ENCODE measurements at regions of chr9 and their contacts with region 1.

Region 1: DNA sequence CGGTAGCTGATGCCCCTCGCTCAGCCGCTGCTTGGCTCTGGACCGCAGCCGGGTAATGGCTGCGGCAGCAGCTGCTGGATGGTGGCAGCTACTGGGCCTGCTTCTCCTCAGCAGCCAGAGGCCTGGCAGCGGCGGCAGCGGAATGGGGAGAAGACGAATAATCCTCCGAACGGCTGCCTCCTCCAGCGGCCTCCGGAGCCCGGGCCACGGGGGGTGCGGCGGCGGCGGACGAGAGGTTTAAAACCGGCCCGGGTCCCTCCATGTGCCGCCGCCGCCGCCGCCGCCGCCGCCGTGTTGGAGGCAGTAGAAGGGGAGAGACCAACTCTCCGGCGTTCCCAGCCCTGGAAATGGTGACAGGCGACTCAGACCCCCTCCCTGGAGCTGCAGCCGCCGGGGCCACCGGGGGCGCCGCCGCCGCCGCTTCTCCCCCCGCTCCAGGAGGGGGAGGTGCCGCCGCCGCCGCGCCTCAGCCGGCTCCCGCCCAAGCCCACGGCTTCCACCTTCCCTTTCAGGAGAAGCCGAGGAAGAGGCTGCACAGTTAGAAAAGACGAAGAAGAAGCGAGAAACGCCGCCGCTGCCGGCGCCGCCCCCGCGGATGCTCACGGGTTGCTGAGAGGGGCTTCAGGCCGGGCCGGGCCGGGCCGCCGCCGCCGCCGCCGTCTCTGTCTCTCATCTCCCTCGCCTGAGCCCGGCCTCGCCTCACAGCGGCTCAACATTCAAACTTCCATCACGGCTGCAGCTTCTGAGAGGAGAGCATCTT is 118.4 kb upstream of the PRSS3 start:
- DNase-seq: peak; percentile 11
- H3K4me3 Mint-ChIP-seq: peak overlapping the region; percentile 90
- H3K27ac Mint-ChIP-seq: no peak overlapping the region
- H3K4me1 Mint-ChIP-seq: peaks cover 18% of the 10 kb centered on the region
- H3K27me3 Mint-ChIP-seq: peaks cover 73% of the 10 kb centered on the region

Region 2: GRCh38 chr9:33637881-33638280 is 39.0 kb before region 1 on chr9:
- intact Hi-C with region 1: loop called (anchors 2 kb)
- DNase-seq: no peak
- H3K4me3 Mint-ChIP-seq: no peak overlapping the region
- H3K27ac Mint-ChIP-seq: no peak overlapping the region
- H3K4me1 Mint-ChIP-seq: no peaks in the 10 kb centered on the region
- H3K27me3 Mint-ChIP-seq: peaks cover 64% of the 10 kb centered on the region

Region 3: DNA sequence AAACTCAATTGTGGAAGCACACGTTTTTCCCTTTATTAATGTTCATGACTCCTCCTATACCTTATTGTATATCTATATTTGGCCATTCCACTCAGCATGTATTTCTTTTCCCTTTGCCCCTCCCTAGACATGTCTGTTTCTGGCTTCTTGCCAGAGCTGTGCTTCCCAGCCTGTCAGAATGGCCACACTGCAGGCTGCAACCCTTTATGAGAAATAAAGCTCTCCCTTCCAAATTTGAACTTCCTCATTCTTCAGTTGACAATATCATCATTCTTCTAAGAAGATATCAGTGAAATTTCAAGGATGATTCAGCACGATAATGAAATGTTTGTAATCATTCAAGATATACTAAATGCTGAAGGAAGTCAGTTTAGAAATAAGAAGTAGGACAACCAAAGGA is 10.9 kb after region 1 on chr9:
- intact Hi-C with region 1: loop called (anchors 1 kb)
- DNase-seq: no peak
- H3K4me3 Mint-ChIP-seq: no peak overlapping the region
- H3K27ac Mint-ChIP-seq: no peak overlapping the region
- H3K4me1 Mint-ChIP-seq: peaks cover 6% of the 10 kb centered on the region
- H3K27me3 Mint-ChIP-seq: peaks cover 58% of the 10 kb centered on the region

Region 4: GRCh38 chr9:33721674-33722358 is 44.9 kb after region 1 on chr9:
- intact Hi-C with region 1: loop called (anchors 10 kb)
- DNase-seq: peak; percentile 80
- H3K4me3 Mint-ChIP-seq: no peak overlapping the region
- H3K27ac Mint-ChIP-seq: no peak overlapping the region
- H3K4me1 Mint-ChIP-seq: peaks cover 1% of the 10 kb centered on the region
- H3K27me3 Mint-ChIP-seq: peaks cover 22% of the 10 kb centered on the region

Measured in activated T-helper 2 cell treated with anti-CD3 and anti-CD28 coated beads, Interferon-gamma antibody, Interleukin-2, Interleukin-4, amounts not matched to agents 10 μg/mL and 5 μg/mL and 100 μg/mL, durations not matched to agents 14 hours and 24 hours and 36 hours (primary cell).